ENCODE measurements at regions of chr20 and their contacts with region 1.

Region 1: GRCh38 chr20:38173237-38174156 is 8.4 kb upstream of the TGM2 start:
- DNase-seq: peak; percentile 84
- H3K4me3 Mint-ChIP-seq: no peak overlapping the region
- H3K27ac Mint-ChIP-seq: peak overlapping the region; percentile 2
- H3K4me1 Mint-ChIP-seq: peaks cover 36% of the 10 kb centered on the region
- H3K27me3 Mint-ChIP-seq: no peaks in the 10 kb centered on the region
- CTCF ChIP-seq: no peak

Region 2: GRCh38 chr20:38152621-38153231 is 20.8 kb before region 1 on chr20:
- CTCF ChIA-PET with region 1: interaction called, 5 read pairs
- POLR2A ChIA-PET with region 1: interaction called, 11 read pairs
- intact Hi-C with region 1: no loop called
- DNase-seq: peak; percentile 85
- H3K4me3 Mint-ChIP-seq: no peak overlapping the region
- H3K27ac Mint-ChIP-seq: peak overlapping the region; percentile 35
- H3K4me1 Mint-ChIP-seq: peaks cover 24% of the 10 kb centered on the region
- H3K27me3 Mint-ChIP-seq: no peaks in the 10 kb centered on the region
- CTCF ChIP-seq: no peak

Region 3: GRCh38 chr20:38304845-38305447 is 131.4 kb after region 1 on chr20:
- CTCF ChIA-PET with region 1: no interaction called
- POLR2A ChIA-PET with region 1: no interaction called
- intact Hi-C with region 1: loop called (anchors 5 kb)
- DNase-seq: peak; percentile 63
- H3K4me3 Mint-ChIP-seq: no peak overlapping the region
- H3K27ac Mint-ChIP-seq: no peak overlapping the region
- H3K4me1 Mint-ChIP-seq: no peaks in the 10 kb centered on the region
- H3K27me3 Mint-ChIP-seq: peaks cover 37% of the 10 kb centered on the region
- CTCF ChIP-seq: peak; percentile 55